Activated CD4-positive, alpha-beta T cell treated with anti-CD3 and anti-CD28 coated beads for 36 hours (primary cell): ENCODE measurements at regions of chr6 and their contacts with region 1.

Region 1: DNA sequence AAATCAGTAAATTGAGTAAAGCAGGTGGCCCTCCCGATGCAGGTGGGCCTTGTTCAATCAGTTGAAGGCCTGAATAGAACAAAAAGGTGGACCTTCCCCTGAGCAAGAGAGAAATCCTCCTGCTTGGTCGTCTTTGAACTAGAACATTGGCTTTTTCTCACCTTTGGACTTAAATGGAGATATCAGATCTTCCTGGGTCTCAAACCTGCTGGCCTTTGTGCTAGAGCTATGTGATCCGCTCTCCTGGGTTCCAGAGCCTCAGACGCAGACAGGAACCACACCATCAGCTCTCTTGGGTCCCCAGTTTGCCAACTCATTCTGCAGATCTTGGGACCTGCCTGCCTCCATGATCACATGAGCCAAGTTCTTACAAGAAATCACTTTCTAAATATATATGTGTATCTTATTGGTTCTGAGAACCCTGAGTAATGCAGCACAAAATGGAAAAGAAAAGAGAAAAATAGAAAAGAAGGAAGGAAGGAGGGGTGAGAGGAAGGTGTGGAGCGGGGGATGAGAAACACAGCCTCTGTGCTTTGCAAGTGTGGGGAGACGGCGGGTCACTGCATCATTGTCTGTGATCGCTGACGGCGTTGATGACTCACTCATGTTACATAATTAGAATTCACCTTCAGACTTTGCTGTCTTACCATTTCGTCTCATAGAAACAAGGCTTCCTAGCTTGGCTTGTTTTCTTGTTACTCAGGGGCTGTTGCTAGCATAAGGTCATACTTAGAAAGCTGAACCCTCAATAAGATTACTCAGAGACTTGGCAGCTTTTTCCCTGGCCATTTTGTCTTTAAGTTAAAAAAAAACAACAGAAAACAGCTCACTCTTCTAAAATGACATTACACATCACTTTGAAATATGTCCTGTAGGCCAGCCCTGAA is 85.7 kb upstream of the NEDD9 start:
- DNase-seq: peak; percentile 87
- ATAC-seq: peak; percentile 93
- H3K4me3 Mint-ChIP-seq: no peak overlapping the region
- H3K27ac Mint-ChIP-seq: peak overlapping the region; percentile 85
- H3K4me1 Mint-ChIP-seq: peaks cover 53% of the 10 kb centered on the region
- H3K27me3 Mint-ChIP-seq: no peaks in the 10 kb centered on the region

Region 2: GRCh38 chr6:11161031-11161966 is 156.8 kb before region 1 on chr6:
- CTCF ChIA-PET with region 1: no interaction called
- POLR2A ChIA-PET with region 1: no interaction called
- intact Hi-C with region 1: no loop called
- DNase-seq: no peak
- ATAC-seq: no peak
- H3K4me3 Mint-ChIP-seq: no peak overlapping the region
- H3K27ac Mint-ChIP-seq: no peak overlapping the region
- H3K4me1 Mint-ChIP-seq: peaks cover 16% of the 10 kb centered on the region
- H3K27me3 Mint-ChIP-seq: no peaks in the 10 kb centered on the region

Region 3: GRCh38 chr6:11232193-11232769 is 85.8 kb before region 1 on chr6 and contains the start of gene NEDD9:
- CTCF ChIA-PET with region 1: no interaction called
- POLR2A ChIA-PET with region 1: no interaction called
- intact Hi-C with region 1: loop called in 1 of 2 experiments (anchors 1 kb)
- DNase-seq: peak; percentile 97
- ATAC-seq: peak; percentile 96
- H3K4me3 Mint-ChIP-seq: peak within 1 kb of the TSS; percentile 81
- H3K27ac Mint-ChIP-seq: peak within 1 kb of the TSS; percentile 95
- H3K4me1 Mint-ChIP-seq: peaks cover 65% of the 10 kb centered on the region
- H3K27me3 Mint-ChIP-seq: no peaks in the 10 kb centered on the region
- total RNA-seq, gene NEDD9: 23.6 to 27.3 TPM

Region 4: GRCh38 chr6:11277275-11278206 is 40.6 kb before region 1 on chr6:
- CTCF ChIA-PET with region 1: interaction called, 4 read pairs
- POLR2A ChIA-PET with region 1: interaction called, 6 read pairs
- intact Hi-C with region 1: loop called in 1 of 2 experiments (anchors 5 kb)
- DNase-seq: peak; percentile 53
- ATAC-seq: peak; percentile 76
- H3K4me3 Mint-ChIP-seq: peak overlapping the region; percentile 40
- H3K27ac Mint-ChIP-seq: peak overlapping the region; percentile 91
- H3K4me1 Mint-ChIP-seq: peaks cover 46% of the 10 kb centered on the region
- H3K27me3 Mint-ChIP-seq: no peaks in the 10 kb centered on the region

Region 5: GRCh38 chr6:11291582-11291981 is 26.5 kb before region 1 on chr6:
- CTCF ChIA-PET with region 1: no interaction called
- POLR2A ChIA-PET with region 1: no interaction called
- intact Hi-C with region 1: loop called (anchors 1 kb)
- DNase-seq: peak; percentile 27
- ATAC-seq: peak; percentile 91
- H3K4me3 Mint-ChIP-seq: no peak overlapping the region
- H3K27ac Mint-ChIP-seq: peak overlapping the region; percentile 49
- H3K4me1 Mint-ChIP-seq: peaks cover 16% of the 10 kb centered on the region
- H3K27me3 Mint-ChIP-seq: no peaks in the 10 kb centered on the region

Region 6: DNA sequence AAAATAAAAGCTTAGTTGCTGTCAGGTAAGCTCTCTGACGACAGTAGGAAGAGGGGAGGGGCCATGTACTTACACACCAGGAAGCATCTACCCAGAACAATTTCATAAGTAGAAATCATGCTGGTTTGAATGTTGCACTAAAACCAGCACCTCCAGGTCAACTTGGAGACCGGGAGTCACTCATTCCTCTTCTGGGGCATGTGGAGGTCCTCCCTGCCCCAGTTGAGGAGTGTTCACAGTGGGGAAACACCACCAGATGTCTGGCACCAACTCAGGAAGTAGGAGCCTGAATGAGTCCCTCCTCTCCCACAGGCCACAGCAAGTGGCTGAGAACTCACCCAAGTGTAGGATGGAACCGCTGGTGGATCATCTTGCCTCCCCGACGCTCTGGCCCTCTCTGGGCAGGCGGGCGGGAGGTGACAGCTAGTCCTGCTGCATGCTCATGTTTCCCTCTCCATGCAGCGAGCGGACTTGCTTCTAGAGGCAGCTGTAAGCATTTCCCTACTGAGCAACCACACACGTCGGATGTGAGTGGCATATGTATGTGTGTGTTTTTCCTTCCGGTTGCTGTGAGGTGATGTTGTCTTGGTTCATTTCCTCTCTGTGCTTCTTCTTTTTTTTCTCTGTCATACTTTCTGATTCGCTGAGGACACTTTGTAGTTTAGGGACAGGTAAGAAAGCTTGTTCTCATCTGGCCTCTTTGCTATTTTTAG is 63.8 kb after region 1 on chr6:
- CTCF ChIA-PET with region 1: no interaction called
- POLR2A ChIA-PET with region 1: no interaction called
- intact Hi-C with region 1: loop called in 1 of 2 experiments (anchors 1 kb)
- DNase-seq: peak; percentile 80
- ATAC-seq: peak; percentile 93
- H3K4me3 Mint-ChIP-seq: peak overlapping the region; percentile 78
- H3K27ac Mint-ChIP-seq: peak overlapping the region; percentile 88
- H3K4me1 Mint-ChIP-seq: peaks cover 56% of the 10 kb centered on the region
- H3K27me3 Mint-ChIP-seq: peaks cover 2% of the 10 kb centered on the region

Region 7: DNA sequence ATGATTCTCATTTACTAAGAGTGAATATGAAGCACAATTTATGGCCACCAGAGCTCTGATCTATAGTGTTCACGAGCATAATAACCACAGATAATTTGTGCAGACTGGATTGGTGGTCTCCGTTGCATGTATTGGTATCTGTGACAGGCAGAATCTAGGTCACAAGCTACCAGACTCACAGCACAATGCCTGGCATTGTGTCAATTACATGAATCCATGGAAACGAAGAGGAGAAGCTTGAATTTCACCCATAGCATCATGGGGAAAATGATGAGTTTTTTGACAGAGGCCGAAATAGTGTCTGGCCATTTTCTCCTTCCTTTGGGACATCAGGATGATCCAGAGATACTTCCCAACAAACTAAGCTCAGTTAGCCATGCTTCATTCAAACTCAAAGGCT is 167.1 kb after region 1 on chr6:
- CTCF ChIA-PET with region 1: no interaction called
- POLR2A ChIA-PET with region 1: no interaction called
- intact Hi-C with region 1: no loop called
- DNase-seq: no peak
- ATAC-seq: no peak
- H3K4me3 Mint-ChIP-seq: no peak overlapping the region
- H3K27ac Mint-ChIP-seq: no peak overlapping the region
- H3K4me1 Mint-ChIP-seq: no peaks in the 10 kb centered on the region
- H3K27me3 Mint-ChIP-seq: peaks cover 2% of the 10 kb centered on the region